ENCODE measurements at regions of chr17 and their contacts with region 1.

Region 1: GRCh38 chr17:72725433-72726068 is 366.9 kb downstream of the SLC39A11 start:
- DNase-seq: no peak
- ATAC-seq: no peak
- H3K4me3 Mint-ChIP-seq: no peak overlapping the region
- H3K27ac Mint-ChIP-seq: no peak overlapping the region
- H3K4me1 Mint-ChIP-seq: peaks cover 23% of the 10 kb centered on the region
- H3K27me3 Mint-ChIP-seq: no peaks in the 10 kb centered on the region
- CTCF ChIP-seq: no peak

Region 2: DNA sequence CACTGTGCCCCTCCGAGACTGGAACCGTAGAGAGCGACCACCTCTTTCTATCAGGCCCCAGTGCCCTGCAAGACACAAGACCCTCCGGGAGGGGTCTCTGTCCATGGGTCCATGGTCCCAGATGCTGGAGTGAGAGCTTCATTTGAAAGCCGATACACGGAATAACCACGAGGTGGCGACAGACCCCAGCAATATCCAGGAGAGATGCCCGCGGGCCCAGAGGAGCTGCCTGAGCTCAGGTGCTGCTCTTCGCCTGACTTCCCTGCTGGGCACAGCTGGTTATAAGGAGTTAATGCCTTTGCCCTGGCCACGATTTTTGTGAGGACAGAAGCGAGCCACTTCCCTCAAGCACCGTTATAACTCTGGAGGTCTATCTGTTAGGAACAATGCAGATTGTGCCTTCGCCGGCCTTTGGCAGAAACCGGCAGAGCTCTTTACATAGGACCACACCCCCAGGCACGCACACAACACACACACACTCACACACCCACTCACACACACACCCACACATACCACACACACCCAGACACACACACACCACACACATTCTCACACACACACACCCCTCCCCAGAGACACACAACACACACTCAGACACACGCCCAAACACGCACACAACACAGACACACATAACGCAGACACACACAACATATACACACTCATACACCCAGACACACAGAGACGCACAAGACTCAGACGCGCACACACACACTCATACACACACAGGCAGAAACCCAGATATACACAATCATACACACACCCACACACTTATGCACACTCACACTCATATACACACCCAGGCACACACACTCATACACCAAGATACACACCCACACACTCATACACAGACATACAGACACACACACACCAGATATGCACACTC is 168.4 kb before region 1 on chr17:
- CTCF ChIA-PET with region 1: interaction called, 4 read pairs
- POLR2A ChIA-PET with region 1: no interaction called
- intact Hi-C with region 1: loop called (anchors 1 kb)
- DNase-seq: peak; percentile 23
- ATAC-seq: peak; percentile 40
- H3K4me3 Mint-ChIP-seq: no peak overlapping the region
- H3K27ac Mint-ChIP-seq: no peak overlapping the region
- H3K4me1 Mint-ChIP-seq: no peaks in the 10 kb centered on the region
- H3K27me3 Mint-ChIP-seq: no peaks in the 10 kb centered on the region
- CTCF ChIP-seq: peak; percentile 34

Region 3: DNA sequence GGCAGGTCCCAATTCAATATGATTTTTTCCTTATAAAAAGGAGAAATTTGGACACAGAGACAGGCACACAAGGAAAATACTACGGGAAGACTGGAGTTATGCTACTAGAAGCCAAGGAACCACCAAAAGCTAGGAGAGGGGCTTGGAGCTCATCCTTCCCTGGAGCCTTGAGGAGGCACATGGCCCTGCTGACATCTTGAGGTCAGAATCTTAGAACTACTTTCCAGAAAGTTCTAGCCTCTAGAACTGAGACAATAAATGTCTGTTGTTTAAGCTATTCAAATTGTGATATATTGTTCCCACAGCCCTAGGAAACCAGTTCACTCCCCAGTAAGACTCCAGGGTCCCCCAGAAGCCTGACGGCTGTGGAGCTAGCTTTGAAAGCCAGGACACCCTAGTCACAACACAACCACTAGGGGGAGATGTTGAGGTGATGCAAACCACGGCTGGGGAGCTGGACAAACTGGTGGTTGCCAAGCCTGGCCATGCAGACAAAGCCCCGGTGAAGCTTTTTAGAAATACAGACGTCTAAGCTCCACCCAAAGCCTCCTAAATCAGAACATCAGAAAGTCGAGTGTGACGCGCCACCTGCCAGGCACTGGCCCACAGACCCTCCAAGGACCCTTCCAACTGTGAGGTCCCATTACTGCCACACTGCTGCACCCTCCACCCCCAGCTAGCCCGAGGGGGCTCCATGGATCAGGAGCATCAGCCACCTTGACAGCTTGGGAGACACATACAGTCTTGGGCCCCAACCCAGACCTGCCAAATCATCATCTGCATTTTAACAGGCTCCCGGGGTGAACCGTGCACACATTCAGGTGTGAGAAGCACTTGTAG is 260.6 kb after region 1 on chr17:
- CTCF ChIA-PET with region 1: interaction called, 9 read pairs
- POLR2A ChIA-PET with region 1: no interaction called
- intact Hi-C with region 1: loop called (anchors 5 kb)
- DNase-seq: no peak
- ATAC-seq: peak; percentile 52
- H3K4me3 Mint-ChIP-seq: no peak overlapping the region
- H3K27ac Mint-ChIP-seq: no peak overlapping the region
- H3K4me1 Mint-ChIP-seq: no peaks in the 10 kb centered on the region
- H3K27me3 Mint-ChIP-seq: no peaks in the 10 kb centered on the region
- CTCF ChIP-seq: peak; percentile 55

Region 4: GRCh38 chr17:73156166-73156840 is 430.8 kb after region 1 on chr17:
- CTCF ChIA-PET with region 1: interaction called, 60 read pairs
- POLR2A ChIA-PET with region 1: no interaction called
- intact Hi-C with region 1: loop called (anchors 1 kb)
- DNase-seq: peak; percentile 41
- ATAC-seq: peak; percentile 84
- H3K4me3 Mint-ChIP-seq: no peak overlapping the region
- H3K27ac Mint-ChIP-seq: no peak overlapping the region
- H3K4me1 Mint-ChIP-seq: peaks cover 17% of the 10 kb centered on the region
- H3K27me3 Mint-ChIP-seq: peaks cover 32% of the 10 kb centered on the region
- CTCF ChIP-seq: no peak

Region 5: GRCh38 chr17:73255671-73256181 is 530.2 kb after region 1 on chr17:
- CTCF ChIA-PET with region 1: interaction called, 10 read pairs
- POLR2A ChIA-PET with region 1: no interaction called
- intact Hi-C with region 1: loop called (anchors 5 kb)
- DNase-seq: peak; percentile 51
- ATAC-seq: peak; percentile 71
- H3K4me3 Mint-ChIP-seq: no peak overlapping the region
- H3K27ac Mint-ChIP-seq: no peak overlapping the region
- H3K4me1 Mint-ChIP-seq: peaks cover 2% of the 10 kb centered on the region
- H3K27me3 Mint-ChIP-seq: no peaks in the 10 kb centered on the region
- CTCF ChIP-seq: peak; percentile 95

Region 6: DNA sequence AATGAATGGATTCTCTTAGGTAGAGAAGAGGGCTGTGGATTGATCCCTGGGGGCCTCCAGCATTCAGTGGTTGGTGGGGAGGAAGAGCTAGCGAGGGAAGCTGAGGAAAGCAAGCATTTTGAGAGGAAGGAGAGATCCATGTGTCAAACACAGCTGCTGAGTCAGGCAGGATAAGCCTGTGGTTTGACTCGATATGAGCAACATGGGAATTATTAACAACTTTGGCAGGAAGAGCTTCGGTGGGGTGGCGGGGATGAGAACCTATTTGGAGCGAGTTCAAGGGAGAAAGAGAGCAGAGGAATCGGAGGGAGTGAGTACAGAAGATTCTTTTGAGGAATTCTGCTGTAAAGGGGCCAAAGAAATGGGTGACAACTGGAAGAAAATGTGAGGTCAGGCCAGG is 645.7 kb after region 1 on chr17:
- CTCF ChIA-PET with region 1: interaction called, 61 read pairs
- POLR2A ChIA-PET with region 1: interaction called, 5 read pairs
- intact Hi-C with region 1: loop called (anchors 1 kb)
- DNase-seq: no peak
- ATAC-seq: no peak
- H3K4me3 Mint-ChIP-seq: no peak overlapping the region
- H3K27ac Mint-ChIP-seq: no peak overlapping the region
- H3K4me1 Mint-ChIP-seq: peaks cover 2% of the 10 kb centered on the region
- H3K27me3 Mint-ChIP-seq: no peaks in the 10 kb centered on the region
- CTCF ChIP-seq: no peak